HEK293 (cell line): ENCODE measurements at regions of chr12 and their contacts with region 1.

Region 1: DNA sequence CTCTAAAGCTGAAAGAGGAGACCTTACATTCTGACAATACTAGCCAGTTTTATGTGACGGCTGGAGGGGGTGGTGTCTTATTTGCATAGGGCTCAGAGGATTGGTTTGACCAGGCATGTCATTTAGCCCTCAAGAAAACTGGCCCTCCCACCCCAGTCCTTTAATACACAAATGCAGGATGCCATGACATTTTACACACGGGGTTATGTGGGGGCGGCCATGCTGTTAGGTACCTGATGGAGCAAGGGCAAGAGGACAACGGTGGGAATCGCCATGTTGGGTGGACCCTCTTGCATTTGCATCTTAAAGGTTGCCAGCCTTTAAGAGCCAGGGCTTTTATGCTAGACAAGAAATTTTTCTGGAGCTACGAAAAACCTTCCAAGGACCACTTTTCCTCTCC is 23.3 kb downstream of the MDM2 start:
- H3K4me3 ChIP-seq: no peak overlapping the region
- H3K27ac ChIP-seq: no peak overlapping the region
- H3K4me1 ChIP-seq: no peaks in the 10 kb centered on the region
- CTCF ChIP-seq: no peak

Region 2: GRCh38 chr12:68815232-68815927 is 15.9 kb before region 1 on chr12:
- CTCF ChIA-PET with region 1: interaction called, 16 read pairs
- POLR2A ChIA-PET with region 1: interaction called, 4 read pairs
- H3K4me3 ChIP-seq: peak overlapping the region; percentile 12
- H3K27ac ChIP-seq: no peak overlapping the region
- H3K4me1 ChIP-seq: 0 out of 2 replicates have a peak, but pooled peaks cover 11% of the 10 kb centered on the region
- CTCF ChIP-seq: no peak

Region 3: GRCh38 chr12:68844788-68845695 is 13.8 kb after region 1 on chr12:
- CTCF ChIA-PET with region 1: interaction called, 18 read pairs
- POLR2A ChIA-PET with region 1: interaction called, 4 read pairs
- H3K4me3 ChIP-seq: no peak overlapping the region
- H3K27ac ChIP-seq: no peak overlapping the region
- H3K4me1 ChIP-seq: no peaks in the 10 kb centered on the region; the same call in 1 of the 2 replicates
- CTCF ChIP-seq: no peak